Natural killer cell (primary cell): ENCODE measurements at regions of chr17 and their contacts with region 1.

Region 1: GRCh38 chr17:30124273-30124796 is 7.7 kb downstream of the NSRP1 start:
- DNase-seq: no peak
- ATAC-seq: no peak
- H3K4me3 ChIP-seq: no peak overlapping the region
- H3K4me3 Mint-ChIP-seq: no peak overlapping the region
- H3K27ac ChIP-seq: no peak overlapping the region
- H3K27ac Mint-ChIP-seq: no peak overlapping the region
- H3K4me1 ChIP-seq: peaks cover 8% of the 10 kb centered on the region
- H3K4me1 Mint-ChIP-seq: peaks cover 26 to 31% of the 10 kb centered on the region in 2 donors
- H3K27me3 ChIP-seq: no peaks in the 10 kb centered on the region
- H3K27me3 Mint-ChIP-seq: no peaks in the 10 kb centered on the region
- CTCF ChIP-seq: no peak

Region 2: DNA sequence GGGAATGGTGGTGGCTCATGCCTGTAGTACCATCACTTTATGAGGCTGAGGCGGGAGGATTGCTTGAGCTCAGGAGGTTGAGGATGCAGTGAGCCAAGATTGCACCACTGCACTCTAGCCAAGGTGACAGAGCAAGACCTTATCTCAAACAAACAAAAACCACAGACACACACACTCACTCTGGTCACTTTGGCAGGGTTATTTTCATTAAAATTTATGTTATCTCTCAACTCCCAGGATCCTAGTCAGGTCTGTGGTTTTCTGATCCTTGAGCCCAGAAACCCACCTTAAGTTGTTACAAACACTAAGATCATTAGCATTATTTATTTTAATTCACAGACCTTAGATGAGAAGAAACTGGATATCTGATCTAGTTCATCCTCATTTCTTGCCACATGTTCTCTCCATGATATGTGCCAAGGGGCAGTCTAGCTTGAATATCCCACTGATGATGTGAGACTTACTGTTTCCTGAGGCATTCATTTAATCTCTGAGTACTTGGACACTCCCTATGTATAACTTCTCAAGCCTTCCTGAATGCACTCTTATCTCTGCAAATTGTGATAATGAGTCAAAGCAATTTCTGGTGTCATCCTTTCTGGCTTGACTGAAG is 567.1 kb before region 1 on chr17:
- intact Hi-C with region 1: no loop called
- DNase-seq: no peak
- ATAC-seq: peak; percentile 20 to 71 (median 35)
- H3K4me3 ChIP-seq: no peak overlapping the region
- H3K4me3 Mint-ChIP-seq: peak overlapping the region; percentile 25
- H3K27ac ChIP-seq: peak overlapping the region; percentile 2
- H3K27ac Mint-ChIP-seq: peak overlapping the region; percentile 78 to 81
- H3K4me1 ChIP-seq: peaks cover 29% of the 10 kb centered on the region
- H3K4me1 Mint-ChIP-seq: peaks cover 29 to 37% of the 10 kb centered on the region in 2 donors
- H3K27me3 ChIP-seq: no peaks in the 10 kb centered on the region
- H3K27me3 Mint-ChIP-seq: no peaks in the 10 kb centered on the region
- CTCF ChIP-seq: no peak

Region 3: GRCh38 chr17:29948448-29949215 is 175.7 kb before region 1 on chr17:
- intact Hi-C with region 1: no loop called
- DNase-seq: no peak
- ATAC-seq: peak in 1 of 3 donors; percentile 63
- H3K4me3 ChIP-seq: no peak overlapping the region
- H3K4me3 Mint-ChIP-seq: no peak overlapping the region
- H3K27ac ChIP-seq: no peak overlapping the region
- H3K27ac Mint-ChIP-seq: no peak overlapping the region
- H3K4me1 ChIP-seq: no peaks in the 10 kb centered on the region
- H3K4me1 Mint-ChIP-seq: no peaks in the 10 kb centered on the region
- H3K27me3 ChIP-seq: no peaks in the 10 kb centered on the region
- H3K27me3 Mint-ChIP-seq: no peaks in the 10 kb centered on the region
- CTCF ChIP-seq: no peak

Region 4: GRCh38 chr17:30104575-30105339 is 19.6 kb before region 1 on chr17:
- intact Hi-C with region 1: loop called (anchors 2 kb)
- DNase-seq: peak; percentile 55 to 87
- ATAC-seq: peak; percentile 93 to 95 (median 94)
- H3K4me3 ChIP-seq: peak overlapping the region; percentile 25
- H3K4me3 Mint-ChIP-seq: peak overlapping the region; percentile 84
- H3K27ac ChIP-seq: no peak overlapping the region
- H3K27ac Mint-ChIP-seq: peak overlapping the region; percentile 4 to 78
- H3K4me1 ChIP-seq: peaks cover 8% of the 10 kb centered on the region
- H3K4me1 Mint-ChIP-seq: peaks cover 6% of the 10 kb centered on the region in 2 donors
- H3K27me3 ChIP-seq: no peaks in the 10 kb centered on the region
- H3K27me3 Mint-ChIP-seq: peaks cover 10 to 27% of the 10 kb centered on the region in 2 donors
- CTCF ChIP-seq: peak; percentile 95

Region 5: GRCh38 chr17:30278032-30278431 is 153.7 kb after region 1 on chr17:
- intact Hi-C with region 1: loop called (anchors 1 kb)
- DNase-seq: peak in 1 of 2 donors; percentile 37
- ATAC-seq: peak in 2 of 3 donors; percentile 55 to 78
- H3K4me3 ChIP-seq: no peak overlapping the region
- H3K4me3 Mint-ChIP-seq: no peak overlapping the region
- H3K27ac ChIP-seq: no peak overlapping the region
- H3K27ac Mint-ChIP-seq: no peak overlapping the region
- H3K4me1 ChIP-seq: no peaks in the 10 kb centered on the region
- H3K4me1 Mint-ChIP-seq: peaks cover 9 to 11% of the 10 kb centered on the region in 2 donors
- H3K27me3 ChIP-seq: no peaks in the 10 kb centered on the region
- H3K27me3 Mint-ChIP-seq: no peaks in the 10 kb centered on the region
- CTCF ChIP-seq: peak; percentile 45